Ovary (tissue), 10 donors: ENCODE measurements at regions of chr13 and their contacts with region 1.

Region 1: DNA sequence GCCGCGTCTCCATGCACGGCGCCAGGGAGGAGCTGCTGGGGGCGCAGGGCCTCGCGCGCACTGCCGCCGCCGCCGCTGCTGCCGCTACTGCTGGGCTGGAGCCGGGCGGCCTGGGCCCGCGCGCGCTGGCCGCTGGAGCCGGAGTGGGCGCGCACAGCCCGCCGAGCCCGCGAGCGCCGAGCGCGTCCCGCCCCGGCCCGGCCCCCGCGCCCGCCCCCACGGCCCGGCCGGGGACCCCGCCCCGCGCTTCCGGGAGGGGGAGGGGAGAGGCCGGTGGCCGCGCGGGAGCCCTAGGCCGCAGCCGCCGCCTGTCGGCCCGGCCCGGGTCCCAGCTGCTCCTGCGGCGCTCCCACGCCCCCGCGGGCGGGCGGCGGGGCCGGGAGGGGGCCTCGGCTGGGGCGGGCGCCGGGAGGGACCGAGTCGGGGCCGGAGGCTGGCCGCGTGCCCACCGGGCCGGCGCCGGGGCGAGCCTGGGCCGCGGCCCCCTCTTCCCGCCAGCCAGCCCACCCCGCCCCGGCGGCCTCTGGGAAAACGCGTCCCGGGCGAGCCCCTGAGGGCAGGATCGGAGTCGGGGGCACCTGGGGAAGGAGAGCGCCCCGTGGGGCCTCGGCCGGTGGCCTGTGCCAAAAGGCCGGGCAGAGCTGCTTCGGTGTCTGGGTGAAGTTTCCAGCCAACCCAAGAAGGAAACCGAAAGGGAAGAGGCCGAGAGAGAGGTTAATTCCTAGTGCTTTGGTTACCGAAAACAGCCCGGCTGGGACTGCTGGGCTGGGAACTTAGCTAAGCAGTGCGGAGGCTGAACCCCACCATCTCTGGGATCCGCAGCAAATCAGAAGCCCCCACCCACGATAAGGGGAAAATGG is at the start of gene STK24:
- DNase-seq: peak; percentile 69 to 85 (median 81)
- H3K4me3 ChIP-seq: peak within 1 kb of the TSS; percentile 99
- H3K27ac ChIP-seq: peak within 1 kb of the TSS; percentile 94 to 97
- H3K4me1 ChIP-seq: peaks cover 4% of the 10 kb centered on the region
- H3K27me3 ChIP-seq: no peaks in the 10 kb centered on the region
- CTCF ChIP-seq: no peak
- EP300 ChIP-seq: no peak
- POLR2A ChIP-seq: no peak
- total RNA-seq, gene STK24: 34.0 to 73.1 (median 60.6) TPM

Region 2: GRCh38 chr13:98445340-98446233 is 131.6 kb before region 1 on chr13:
- intact Hi-C with region 1: loop called (anchors 5 to 10 kb)
- DNase-seq: peak; percentile 68 to 87 (median 79)
- H3K4me3 ChIP-seq: no peak overlapping the region
- H3K27ac ChIP-seq: peak overlapping the region in 1 of 2 donors; percentile 41
- H3K4me1 ChIP-seq: peaks cover 2% of the 10 kb centered on the region
- H3K27me3 ChIP-seq: no peaks in the 10 kb centered on the region
- CTCF ChIP-seq: peak; percentile 91 to 96 (median 93)
- EP300 ChIP-seq: no peak
- POLR2A ChIP-seq: no peak

Region 3: GRCh38 chr13:98484289-98485219 is 92.6 kb before region 1 on chr13:
- intact Hi-C with region 1: loop called in 2 of 4 experiments (anchors 10 kb)
- DNase-seq: peak in 4 of 5 donors; percentile 48 to 64 (median 53)
- H3K4me3 ChIP-seq: no peak overlapping the region
- H3K27ac ChIP-seq: peak overlapping the region in 1 of 2 donors; percentile 60
- H3K4me1 ChIP-seq: peaks cover 29% of the 10 kb centered on the region
- H3K27me3 ChIP-seq: no peaks in the 10 kb centered on the region
- CTCF ChIP-seq: no peak
- EP300 ChIP-seq: no peak
- POLR2A ChIP-seq: no peak

Region 4: DNA sequence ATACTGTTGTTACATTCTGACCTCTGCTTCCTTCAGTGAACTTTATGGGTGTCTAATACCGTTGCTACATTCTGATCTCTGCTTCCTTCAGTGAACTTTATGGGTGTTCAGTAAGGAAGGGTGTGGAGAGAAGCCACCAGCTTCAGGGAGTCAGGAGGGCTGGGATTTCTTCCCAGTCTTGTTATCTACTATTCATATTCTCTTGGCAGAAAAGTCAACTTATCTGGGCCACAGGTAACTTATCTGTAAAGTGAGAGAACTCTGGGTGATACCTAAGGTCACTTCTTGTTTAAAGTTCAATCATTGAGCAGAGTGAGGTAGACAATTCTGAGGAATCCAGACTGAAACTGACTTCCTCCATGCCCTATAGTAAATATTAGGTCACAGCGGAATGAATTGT is 70.9 kb after region 1 on chr13:
- intact Hi-C with region 1: loop called in 1 of 4 experiments (anchors 10 kb)
- DNase-seq: no peak
- H3K4me3 ChIP-seq: no peak overlapping the region
- H3K27ac ChIP-seq: no peak overlapping the region
- H3K4me1 ChIP-seq: no peaks in the 10 kb centered on the region
- H3K27me3 ChIP-seq: no peaks in the 10 kb centered on the region
- CTCF ChIP-seq: no peak
- EP300 ChIP-seq: no peak
- POLR2A ChIP-seq: no peak